ENCODE measurements at regions of chr11 and their contacts with region 1.

Region 1: GRCh38 chr11:69718147-69718546 is 14.3 kb upstream of the FGF19 start:
- DNase-seq: peak; percentile 77 to 84
- H3K4me3 ChIP-seq: peak overlapping the region in 1 of 4 experiments; percentile 14; a peak in 1 of 8 replicates
- H3K27ac ChIP-seq: no peak overlapping the region
- H3K4me1 ChIP-seq: peaks cover 0 to 10% (median 2%) of the 10 kb centered on the region in 4 experiments; a peak in 5 of 7 replicates
- H3K27me3 ChIP-seq: peaks cover 0 to 19% (median 13%) of the 10 kb centered on the region in 4 experiments; a peak in 5 of 7 replicates
- CTCF ChIP-seq: peak; percentile 87 to 92 (median 91)
- EP300 ChIP-seq: no peak
- POLR2A ChIP-seq: no peak
- RAD21 ChIP-seq: peak; percentile 85 to 92

Region 2: DNA sequence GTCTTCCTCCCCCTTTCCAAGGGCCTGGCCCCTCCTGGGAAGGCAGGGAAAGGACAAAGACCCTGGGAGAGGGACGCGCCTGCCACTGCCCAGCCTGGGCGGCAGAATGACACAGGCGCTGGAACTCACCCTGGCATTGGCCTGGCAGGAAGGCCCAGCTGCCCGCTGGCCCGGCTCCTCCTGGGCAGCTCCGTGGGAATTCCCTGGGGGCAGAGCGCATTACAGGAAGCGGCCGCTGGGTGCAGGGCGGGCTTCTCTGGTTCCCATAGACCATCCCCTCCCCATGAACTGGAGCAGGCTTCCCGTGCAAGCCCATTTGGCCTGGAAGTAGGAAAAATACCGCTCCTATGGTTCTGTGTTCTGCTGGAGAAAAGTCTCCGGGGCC is 178.0 kb before region 1 on chr11:
- CTCF ChIA-PET with region 1: no interaction called
- POLR2A ChIA-PET with region 1: no interaction called
- DNase-seq: peak in 1 of 2 experiments; percentile 59
- H3K4me3 ChIP-seq: no peak overlapping the region
- H3K27ac ChIP-seq: no peak overlapping the region
- H3K4me1 ChIP-seq: peaks cover 0 to 9% (median 2%) of the 10 kb centered on the region in 4 experiments; a peak in 2 of 7 replicates
- H3K27me3 ChIP-seq: no peaks in the 10 kb centered on the region
- CTCF ChIP-seq: 0 out of 4 replicates have a peak, but pooled peaks of 1 of the 3 experiments have one; percentile 9
- EP300 ChIP-seq: no peak
- POLR2A ChIP-seq: no peak
- RAD21 ChIP-seq: peak in 1 of 2 experiments; percentile 35; a peak in 1 of 4 replicates

Region 3: GRCh38 chr11:69704508-69705253 is 13.5 kb before region 1 on chr11:
- CTCF ChIA-PET with region 1: interaction called, 11 read pairs
- POLR2A ChIA-PET with region 1: interaction called, 6 read pairs
- DNase-seq: peak in 1 of 2 experiments; percentile 96
- H3K4me3 ChIP-seq: peak overlapping the region; percentile 37 to 78 (median 62)
- H3K27ac ChIP-seq: 0 out of 2 replicates have a peak overlapping the region, but pooled peaks have one; percentile 44
- H3K4me1 ChIP-seq: peaks cover 11 to 36% (median 24%) of the 10 kb centered on the region in 4 experiments
- H3K27me3 ChIP-seq: peaks cover 0 to 26% (median 17%) of the 10 kb centered on the region in 4 experiments; a peak in 5 of 7 replicates
- CTCF ChIP-seq: peak; percentile 63 to 76 (median 75)
- EP300 ChIP-seq: no peak
- POLR2A ChIP-seq: no peak
- RAD21 ChIP-seq: peak; percentile 70 to 82

Region 4: GRCh38 chr11:69801519-69802335 is 83.6 kb after region 1 on chr11:
- CTCF ChIA-PET with region 1: interaction called, 197 read pairs
- POLR2A ChIA-PET with region 1: interaction called, 3 read pairs
- DNase-seq: peak; percentile 59 to 96
- H3K4me3 ChIP-seq: no peak overlapping the region
- H3K27ac ChIP-seq: no peak overlapping the region
- H3K4me1 ChIP-seq: peaks cover 0 to 5% (median 0%) of the 10 kb centered on the region in 4 experiments; a peak in 3 of 7 replicates
- H3K27me3 ChIP-seq: no peaks in the 10 kb centered on the region; a peak in 1 of 7 replicates
- CTCF ChIP-seq: peak; percentile 89 to 97 (median 91)
- EP300 ChIP-seq: no peak
- POLR2A ChIP-seq: no peak
- RAD21 ChIP-seq: peak; percentile 77 to 87

Region 5: GRCh38 chr11:69841859-69842698 is 123.9 kb after region 1 on chr11:
- CTCF ChIA-PET with region 1: interaction called, 15 read pairs
- POLR2A ChIA-PET with region 1: no interaction called
- DNase-seq: peak in 1 of 2 experiments; percentile 63
- H3K4me3 ChIP-seq: no peak overlapping the region
- H3K27ac ChIP-seq: no peak overlapping the region
- H3K4me1 ChIP-seq: peaks cover 0 to 11% (median 2%) of the 10 kb centered on the region in 4 experiments; a peak in 4 of 7 replicates
- H3K27me3 ChIP-seq: peaks cover 0 to 2% (median 0%) of the 10 kb centered on the region in 4 experiments; a peak in 2 of 7 replicates
- CTCF ChIP-seq: peak; percentile 69 to 84 (median 79)
- EP300 ChIP-seq: no peak
- POLR2A ChIP-seq: no peak
- RAD21 ChIP-seq: peak; percentile 47 to 63

Region 6: GRCh38 chr11:69888483-69889076 is 170.4 kb after region 1 on chr11:
- CTCF ChIA-PET with region 1: interaction called, 56 read pairs
- POLR2A ChIA-PET with region 1: no interaction called
- DNase-seq: peak; percentile 75 to 96
- H3K4me3 ChIP-seq: no peak overlapping the region
- H3K27ac ChIP-seq: no peak overlapping the region
- H3K4me1 ChIP-seq: peaks cover 8 to 24% (median 10%) of the 10 kb centered on the region in 4 experiments
- H3K27me3 ChIP-seq: peaks cover 0 to 28% (median 12%) of the 10 kb centered on the region in 4 experiments; a peak in 5 of 7 replicates
- CTCF ChIP-seq: peak; percentile 93 to 100 (median 97)
- EP300 ChIP-seq: no peak
- POLR2A ChIP-seq: no peak
- RAD21 ChIP-seq: peak; percentile 76 to 84

Region 7: GRCh38 chr11:69962152-69962551 is 244.0 kb after region 1 on chr11:
- CTCF ChIA-PET with region 1: no interaction called
- POLR2A ChIA-PET with region 1: no interaction called
- DNase-seq: no peak
- H3K4me3 ChIP-seq: no peak overlapping the region
- H3K27ac ChIP-seq: no peak overlapping the region
- H3K4me1 ChIP-seq: peaks cover 0 to 26% (median 16%) of the 10 kb centered on the region in 4 experiments; a peak in 6 of 7 replicates
- H3K27me3 ChIP-seq: no peaks in the 10 kb centered on the region; a peak in 3 of 7 replicates
- CTCF ChIP-seq: no peak
- EP300 ChIP-seq: no peak
- POLR2A ChIP-seq: no peak
- RAD21 ChIP-seq: no peak

Region 8: DNA sequence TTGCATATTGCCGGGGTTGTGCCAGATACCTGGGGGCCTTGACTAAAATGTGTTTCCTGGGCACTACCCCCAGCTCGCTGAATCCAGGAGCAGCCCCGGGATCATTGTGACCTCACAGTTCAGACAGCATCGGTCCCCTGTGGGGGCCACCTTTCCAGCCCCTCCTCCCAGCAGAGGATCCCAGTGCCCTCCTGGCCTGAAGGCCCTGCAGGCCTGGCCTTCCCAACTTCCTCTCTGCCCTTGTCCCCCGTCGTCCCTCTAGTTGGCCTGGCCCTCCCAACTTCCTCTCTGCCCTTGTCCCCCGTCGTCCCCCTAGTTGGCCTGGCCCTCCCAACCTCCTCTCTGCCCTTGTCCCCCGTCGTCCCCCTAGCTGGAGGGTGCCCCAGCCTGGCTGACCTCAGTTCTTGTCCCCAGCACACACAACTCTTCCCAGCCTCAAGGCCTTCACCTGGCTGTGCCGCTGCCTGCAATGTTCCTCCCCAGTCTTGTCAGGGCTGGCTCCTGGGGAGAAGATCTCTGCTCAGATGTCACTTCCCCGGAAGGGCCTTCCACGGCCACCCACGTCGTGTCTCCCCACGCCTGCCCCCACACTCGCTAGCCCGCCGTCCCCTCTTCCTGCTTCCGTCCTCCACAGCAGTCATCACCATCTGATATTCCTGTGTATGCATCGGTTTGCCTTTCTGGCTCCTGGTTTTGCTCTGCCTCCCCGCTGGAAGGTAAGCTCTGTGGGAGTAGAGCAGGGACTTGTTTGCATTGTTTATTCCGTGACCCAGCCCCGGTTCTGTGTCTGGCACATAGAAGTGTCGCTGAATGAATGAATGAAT is 347.4 kb after region 1 on chr11:
- CTCF ChIA-PET with region 1: no interaction called
- POLR2A ChIA-PET with region 1: no interaction called
- DNase-seq: peak in 1 of 2 experiments; percentile 38
- H3K4me3 ChIP-seq: no peak overlapping the region
- H3K27ac ChIP-seq: no peak overlapping the region
- H3K4me1 ChIP-seq: peaks cover 5 to 26% (median 9%) of the 10 kb centered on the region in 4 experiments
- H3K27me3 ChIP-seq: peaks cover 0 to 7% (median 0%) of the 10 kb centered on the region in 4 experiments; a peak in 2 of 7 replicates
- CTCF ChIP-seq: no peak
- EP300 ChIP-seq: no peak
- POLR2A ChIP-seq: no peak
- RAD21 ChIP-seq: no peak

Measured in H1 (cell line).